T-cell (primary cell): ENCODE measurements at regions of chr3 and their contacts with region 1.

Region 1: GRCh38 chr3:136728918-136729317 is 23.3 kb downstream of the STAG1 start:
- DNase-seq: no peak
- ATAC-seq: no peak
- H3K4me3 ChIP-seq: no peak overlapping the region
- H3K4me3 Mint-ChIP-seq: peak overlapping the region in 1 of 3 donors; percentile 21
- H3K27ac ChIP-seq: no peak overlapping the region
- H3K27ac Mint-ChIP-seq: peak overlapping the region in 1 of 2 donors; percentile 61
- H3K4me1 ChIP-seq: peaks cover 38 to 43% of the 10 kb centered on the region in 2 experiments
- H3K4me1 Mint-ChIP-seq: peaks cover 66 to 75% (median 74%) of the 10 kb centered on the region in 3 donors
- H3K27me3 ChIP-seq: no peaks in the 10 kb centered on the region
- H3K27me3 Mint-ChIP-seq: no peaks in the 10 kb centered on the region

Region 2: GRCh38 chr3:136109499-136109898 is 619.4 kb before region 1 on chr3:
- CTCF ChIA-PET with region 1: interaction called in 1 of 2 experiments, 11 read pairs
- POLR2A ChIA-PET with region 1: no interaction called
- DNase-seq: no peak
- ATAC-seq: no peak
- H3K4me3 ChIP-seq: no peak overlapping the region
- H3K4me3 Mint-ChIP-seq: no peak overlapping the region
- H3K27ac ChIP-seq: no peak overlapping the region
- H3K27ac Mint-ChIP-seq: no peak overlapping the region
- H3K4me1 ChIP-seq: peaks cover 2 to 3% of the 10 kb centered on the region in 2 experiments
- H3K4me1 Mint-ChIP-seq: peaks cover 12 to 16% (median 16%) of the 10 kb centered on the region in 3 donors
- H3K27me3 ChIP-seq: peaks cover 0 to 1% of the 10 kb centered on the region in 2 experiments
- H3K27me3 Mint-ChIP-seq: no peaks in the 10 kb centered on the region